Left colon (tissue), 2 donors: ENCODE measurements at regions of chr18 and their contacts with region 1.

Region 1: DNA sequence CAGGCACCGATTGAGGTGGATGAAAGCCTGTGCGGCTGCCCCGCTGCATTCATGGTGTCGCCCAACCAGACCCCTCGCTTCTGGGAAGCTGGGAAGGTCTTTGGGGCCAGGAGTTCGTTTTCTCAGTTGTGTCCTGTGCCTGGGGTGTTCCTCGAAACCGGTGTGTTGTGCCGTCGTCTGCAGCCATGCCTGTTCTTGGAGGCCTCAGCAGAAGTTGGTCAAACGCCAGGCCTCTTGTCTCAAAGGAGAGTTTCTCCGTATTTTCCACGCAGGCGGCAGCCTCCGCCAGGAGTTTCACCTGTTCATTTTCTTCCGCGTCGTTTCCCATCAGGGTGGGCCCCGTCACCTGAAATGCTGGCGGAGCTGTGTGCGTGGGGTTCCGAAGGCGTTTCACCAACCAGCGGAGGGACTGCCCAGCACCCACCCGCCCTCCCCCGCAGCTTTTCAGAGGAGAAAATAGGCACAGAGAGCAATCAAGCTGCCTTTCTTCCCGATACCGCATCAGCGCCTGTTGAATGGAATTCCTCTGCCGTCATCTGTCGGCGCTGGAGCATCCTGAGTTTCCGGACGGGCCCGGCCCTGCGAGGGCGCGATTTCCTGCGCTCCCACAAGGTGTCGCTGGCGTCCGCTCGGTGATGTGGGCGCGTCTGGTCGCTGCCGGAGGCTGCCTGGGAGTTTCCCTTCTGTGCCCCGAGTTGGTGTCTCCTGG is 17.0 kb upstream of the NFATC1 start:
- DNase-seq: peak; percentile 62 to 81
- ATAC-seq: peak; percentile 83

Region 2: DNA sequence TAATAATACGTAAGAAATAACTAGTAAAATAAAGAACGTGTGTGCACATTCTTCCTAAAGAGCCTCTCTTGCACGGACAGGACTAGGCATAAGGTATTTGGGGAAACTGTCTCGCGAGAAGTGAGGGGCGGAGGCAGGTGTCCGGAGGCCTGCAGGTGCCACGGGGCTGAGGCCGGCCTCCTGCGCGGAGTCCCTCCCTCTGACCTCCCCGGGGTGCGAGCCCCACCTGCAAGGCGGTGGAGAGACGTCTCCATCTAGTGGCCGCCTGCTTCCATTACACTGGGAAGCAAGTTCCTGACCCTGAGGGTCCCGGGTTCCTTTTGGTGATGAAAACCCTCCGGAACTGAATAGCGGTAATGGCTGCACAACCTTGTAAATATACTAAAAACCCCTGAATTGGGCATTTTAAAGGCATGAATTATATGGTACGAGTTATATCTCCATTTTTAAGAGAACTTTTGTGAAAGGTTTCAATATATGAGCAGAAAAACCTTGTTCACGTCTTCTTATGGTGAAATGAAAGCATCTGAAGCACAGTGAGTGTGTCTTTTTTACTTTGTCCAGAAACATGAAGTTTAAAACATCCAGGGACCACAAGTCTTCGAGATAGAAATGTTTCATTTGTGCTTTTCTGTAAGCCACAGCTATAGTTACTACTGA is 265.4 kb after region 1 on chr18:
- intact Hi-C with region 1: loop called (anchors 2 to 5 kb)
- DNase-seq: peak; percentile 47 to 65
- ATAC-seq: peak; percentile 82